Activated CD4-positive, alpha-beta memory T cell treated with anti-CD3 and anti-CD28 coated beads for 36 hours (primary cell): ENCODE measurements at regions of chr1 and their contacts with region 1.

Region 1: GRCh38 chr1:44775078-44775929 is at the start of gene RPS8:
- DNase-seq: peak; percentile 94
- H3K4me3 Mint-ChIP-seq: peak within 1 kb of the TSS; percentile 83
- H3K27ac Mint-ChIP-seq: peak within 1 kb of the TSS; percentile 81
- H3K4me1 Mint-ChIP-seq: peaks cover 38% of the 10 kb centered on the region
- H3K27me3 Mint-ChIP-seq: no peaks in the 10 kb centered on the region
- total RNA-seq, gene RPS8: 2,983 to 3,047 TPM

Region 2: DNA sequence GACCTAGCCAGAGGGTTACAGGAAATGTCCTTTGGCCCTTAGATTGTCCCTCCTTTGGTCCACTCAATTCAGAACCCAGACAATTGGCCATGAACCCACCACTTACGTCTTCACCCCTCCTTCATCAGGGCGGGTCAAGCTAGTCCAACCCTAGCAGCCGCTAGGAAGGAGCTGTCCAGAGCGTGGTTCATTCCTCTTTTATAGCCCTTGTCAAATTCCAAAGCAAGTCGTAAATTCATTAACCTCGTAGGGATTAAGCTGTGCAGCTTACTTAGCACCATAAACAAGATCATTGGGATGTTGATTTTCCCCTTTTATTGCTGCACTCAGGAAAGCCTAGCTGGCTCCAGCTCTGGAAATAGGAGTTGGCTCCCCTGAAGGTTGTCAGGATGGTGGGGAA is 191.1 kb before region 1 on chr1:
- CTCF ChIA-PET with region 1: no interaction called
- POLR2A ChIA-PET with region 1: no interaction called
- intact Hi-C with region 1: no loop called
- DNase-seq: no peak
- H3K4me3 Mint-ChIP-seq: no peak overlapping the region
- H3K27ac Mint-ChIP-seq: no peak overlapping the region
- H3K4me1 Mint-ChIP-seq: no peaks in the 10 kb centered on the region
- H3K27me3 Mint-ChIP-seq: peaks cover 6% of the 10 kb centered on the region

Region 3: GRCh38 chr1:44759077-44759476 is 16.2 kb before region 1 on chr1:
- CTCF ChIA-PET with region 1: no interaction called
- POLR2A ChIA-PET with region 1: interaction called, 15 read pairs
- intact Hi-C with region 1: no loop called
- DNase-seq: no peak
- H3K4me3 Mint-ChIP-seq: no peak overlapping the region
- H3K27ac Mint-ChIP-seq: no peak overlapping the region
- H3K4me1 Mint-ChIP-seq: peaks cover 3% of the 10 kb centered on the region
- H3K27me3 Mint-ChIP-seq: no peaks in the 10 kb centered on the region

Region 4: DNA sequence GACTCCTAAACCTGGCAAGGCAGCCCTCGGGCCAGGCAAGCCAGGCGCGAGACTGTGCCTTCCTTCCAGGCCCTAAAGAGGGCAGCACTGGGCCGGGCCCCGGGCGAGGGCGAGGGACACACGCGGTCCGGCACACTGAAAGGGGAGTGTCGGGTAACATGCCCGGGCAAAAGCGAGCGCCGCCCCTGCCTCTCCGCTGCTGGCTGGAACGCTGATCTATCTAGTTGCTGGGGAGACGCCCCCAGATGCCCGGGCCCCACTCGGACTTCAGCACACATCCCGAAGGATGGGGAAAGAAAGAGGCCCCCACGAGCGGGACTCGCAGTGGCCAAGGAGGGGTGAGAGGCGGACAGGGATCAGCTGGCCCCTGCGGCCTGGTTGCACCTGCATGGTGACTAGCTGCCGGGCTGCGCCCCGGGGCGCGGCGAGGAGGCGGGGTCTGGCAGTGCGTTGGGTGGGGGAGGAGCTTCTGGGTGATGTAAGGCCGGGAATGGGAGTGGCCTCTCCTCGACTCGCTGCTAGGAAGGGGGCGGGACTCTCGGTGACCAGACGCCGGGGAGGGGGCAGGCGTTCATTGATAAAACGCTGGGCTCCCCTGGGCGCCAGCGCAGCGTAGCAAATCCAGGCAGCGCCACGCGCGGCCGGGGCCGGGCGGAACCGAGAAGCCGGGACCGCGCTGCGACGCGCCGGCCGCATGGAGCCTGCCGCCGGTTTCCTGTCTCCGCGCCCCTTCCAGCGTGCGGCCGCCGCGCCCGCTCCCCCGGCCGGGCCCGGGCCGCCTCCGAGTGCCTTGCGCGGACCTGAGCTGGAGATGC is 24.7 kb after region 1 on chr1 and contains the start of gene PLK3:
- CTCF ChIA-PET with region 1: interaction called, 13 read pairs
- POLR2A ChIA-PET with region 1: interaction called, 36 read pairs
- intact Hi-C with region 1: no loop called
- DNase-seq: peak; percentile 99
- H3K4me3 Mint-ChIP-seq: peak within 1 kb of the TSS; percentile 93
- H3K27ac Mint-ChIP-seq: peak within 1 kb of the TSS; percentile 95
- H3K4me1 Mint-ChIP-seq: peaks cover 34% of the 10 kb centered on the region
- H3K27me3 Mint-ChIP-seq: no peaks in the 10 kb centered on the region
- total RNA-seq, gene PLK3: 80.2 to 87.9 TPM

Region 5: DNA sequence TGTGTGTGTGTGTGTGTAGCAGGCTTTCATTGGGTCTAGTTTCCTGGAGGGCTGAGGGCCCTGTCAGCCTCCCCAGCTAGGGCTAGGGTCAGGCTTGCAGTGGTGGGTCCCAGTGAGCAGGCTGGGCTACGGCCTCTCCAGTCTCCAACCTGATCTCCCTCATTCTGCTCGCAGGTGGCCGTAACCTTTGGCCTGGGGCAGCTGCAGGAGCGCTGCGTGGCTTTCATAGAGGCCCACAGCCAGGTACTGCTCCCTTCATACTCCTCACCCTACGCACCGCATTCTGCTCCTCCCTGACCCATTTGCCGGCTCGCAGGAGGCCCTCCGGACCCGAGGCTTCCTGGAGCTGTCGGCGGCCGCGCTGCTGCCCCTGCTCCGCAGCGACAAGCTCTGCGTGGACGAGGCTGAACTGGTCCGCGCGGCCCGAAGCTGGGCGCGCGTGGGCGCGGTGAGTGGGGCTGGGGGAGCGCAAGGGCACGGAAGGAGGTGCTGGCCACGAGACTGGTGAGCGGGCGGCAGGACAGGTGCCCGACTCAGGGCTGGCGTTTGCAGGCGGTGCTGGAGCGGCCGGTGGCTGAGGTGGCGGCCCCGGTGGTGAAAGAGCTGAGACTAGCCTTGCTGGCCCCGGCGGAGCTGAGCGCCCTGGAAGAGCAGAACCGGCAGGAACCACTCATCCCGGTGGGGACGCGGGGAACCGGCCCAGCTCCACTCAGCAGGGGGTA is 37.7 kb after region 1 on chr1:
- CTCF ChIA-PET with region 1: interaction called, 4 read pairs
- POLR2A ChIA-PET with region 1: interaction called, 37 read pairs
- intact Hi-C with region 1: no loop called
- DNase-seq: no peak
- H3K4me3 Mint-ChIP-seq: peak overlapping the region; percentile 73
- H3K27ac Mint-ChIP-seq: peak overlapping the region; percentile 98
- H3K4me1 Mint-ChIP-seq: peaks cover 67% of the 10 kb centered on the region
- H3K27me3 Mint-ChIP-seq: no peaks in the 10 kb centered on the region

Region 6: GRCh38 chr1:44881011-44881632 is 105.8 kb after region 1 on chr1:
- CTCF ChIA-PET with region 1: no interaction called
- POLR2A ChIA-PET with region 1: no interaction called
- intact Hi-C with region 1: no loop called
- DNase-seq: no peak
- H3K4me3 Mint-ChIP-seq: no peak overlapping the region
- H3K27ac Mint-ChIP-seq: no peak overlapping the region
- H3K4me1 Mint-ChIP-seq: no peaks in the 10 kb centered on the region
- H3K27me3 Mint-ChIP-seq: no peaks in the 10 kb centered on the region